Activated T-helper 1 cell treated with anti-CD3 and anti-CD28 coated beads, Interleukin-12 subunit alpha, Interleukin-12 subunit beta, Interleukin-2, Interleukin-4 antibody, amounts not matched to agents 30 ng/mL and 10 ng/mL and 1 ng/mL, durations not matched to agents 14 hours and 24 hours and 36 hours (primary cell): ENCODE measurements at regions of chr21 and their contacts with region 1.

Region 1: GRCh38 chr21:42923541-42924432 is 1.6 kb downstream of the ERVH48-1 start:
- DNase-seq: peak; percentile 74
- H3K4me3 Mint-ChIP-seq: peak overlapping the region; percentile 35
- H3K27ac Mint-ChIP-seq: peak overlapping the region; percentile 67
- H3K4me1 Mint-ChIP-seq: peaks cover 16% of the 10 kb centered on the region
- H3K27me3 Mint-ChIP-seq: no peaks in the 10 kb centered on the region

Region 2: GRCh38 chr21:42892931-42893755 is 30.6 kb before region 1 on chr21 and contains the start of gene NDUFV3:
- intact Hi-C with region 1: loop called (anchors 1 kb)
- DNase-seq: peak; percentile 99
- H3K4me3 Mint-ChIP-seq: peak within 1 kb of the TSS; percentile 89
- H3K27ac Mint-ChIP-seq: peak within 1 kb of the TSS; percentile 91
- H3K4me1 Mint-ChIP-seq: peaks cover 12% of the 10 kb centered on the region
- H3K27me3 Mint-ChIP-seq: no peaks in the 10 kb centered on the region
- total RNA-seq, gene NDUFV3: 41.9 and 44.4 TPM in 2 replicates